ENCODE measurements at regions of chr6 and their contacts with region 1.

Region 1: GRCh38 chr6:122839477-122839876 is 50.4 kb downstream of the SMPDL3A start:
- DNase-seq: peak in 4 of 6 donors; percentile 27 to 72 (median 33)
- ATAC-seq: peak; percentile 48 to 97 (median 94)
- H3K4me3 ChIP-seq: no peak overlapping the region
- H3K27ac ChIP-seq: no peak overlapping the region
- H3K4me1 ChIP-seq: no peaks in the 10 kb centered on the region
- H3K27me3 ChIP-seq: no peaks in the 10 kb centered on the region
- CTCF ChIP-seq: peak; percentile 30 to 60 (median 38)

Region 2: GRCh38 chr6:122663981-122664380 is 175.5 kb before region 1 on chr6:
- intact Hi-C with region 1: no loop called
- DNase-seq: peak in 4 of 6 donors; percentile 17 to 50 (median 24)
- ATAC-seq: peak; percentile 69 to 72 (median 72)
- H3K4me3 ChIP-seq: no peak overlapping the region
- H3K27ac ChIP-seq: no peak overlapping the region
- H3K4me1 ChIP-seq: no peaks in the 10 kb centered on the region
- H3K27me3 ChIP-seq: no peaks in the 10 kb centered on the region
- CTCF ChIP-seq: no peak

Region 3: GRCh38 chr6:122730775-122731386 is 108.6 kb before region 1 on chr6:
- intact Hi-C with region 1: loop called in 2 of 3 experiments (anchors 5 to 10 kb)
- DNase-seq: peak in 1 of 6 donors; percentile 23
- ATAC-seq: peak in 3 of 4 donors; percentile 74 to 84 (median 81)
- H3K4me3 ChIP-seq: no peak overlapping the region
- H3K27ac ChIP-seq: no peak overlapping the region
- H3K4me1 ChIP-seq: no peaks in the 10 kb centered on the region
- H3K27me3 ChIP-seq: no peaks in the 10 kb centered on the region
- CTCF ChIP-seq: peak; percentile 27 to 59 (median 52)

Region 4: DNA sequence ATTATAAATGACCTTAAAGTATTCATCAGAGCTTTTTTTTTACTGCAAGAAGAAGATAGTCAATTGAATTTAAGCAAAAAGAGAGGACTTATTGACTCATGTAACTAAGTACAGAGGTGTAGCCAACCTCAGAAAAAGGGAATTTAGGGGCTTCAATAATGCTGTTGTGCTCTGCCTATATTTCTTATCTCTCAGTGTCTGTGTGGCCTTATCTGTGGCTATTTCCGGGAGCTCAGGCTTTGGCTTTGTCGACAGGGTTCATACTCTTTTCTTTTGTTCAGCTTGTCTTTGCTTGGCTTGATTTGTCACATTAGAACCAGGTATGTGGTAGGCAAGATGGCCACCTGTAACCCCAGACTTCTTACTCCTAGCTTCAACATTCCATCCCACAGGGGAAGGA is 98.5 kb before region 1 on chr6:
- intact Hi-C with region 1: loop called in 2 of 3 experiments (anchors 5 to 10 kb)
- DNase-seq: no peak
- ATAC-seq: no peak
- H3K4me3 ChIP-seq: no peak overlapping the region
- H3K27ac ChIP-seq: no peak overlapping the region
- H3K4me1 ChIP-seq: no peaks in the 10 kb centered on the region
- H3K27me3 ChIP-seq: no peaks in the 10 kb centered on the region
- CTCF ChIP-seq: no peak

Region 5: DNA sequence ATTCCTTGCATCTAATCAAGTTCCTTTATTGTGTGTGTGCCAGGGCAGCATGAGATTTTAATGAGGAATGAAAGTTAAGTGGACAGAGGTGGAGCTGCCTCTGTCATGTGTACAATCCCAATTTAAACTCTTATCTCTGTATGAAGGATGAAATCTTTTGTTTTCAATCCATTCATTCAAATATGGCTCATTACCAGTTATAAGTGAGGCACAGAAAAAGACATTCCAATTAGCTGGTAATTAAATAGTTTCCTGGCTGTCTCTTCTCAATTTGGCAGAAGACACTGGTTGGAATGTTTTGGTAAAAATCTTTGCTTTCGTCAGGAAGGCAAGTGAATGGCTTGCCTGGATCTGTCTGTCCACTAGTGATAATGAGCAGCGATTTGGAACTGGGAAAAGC is 202.9 kb after region 1 on chr6:
- intact Hi-C with region 1: no loop called
- DNase-seq: no peak
- ATAC-seq: no peak
- H3K4me3 ChIP-seq: no peak overlapping the region
- H3K27ac ChIP-seq: no peak overlapping the region
- H3K4me1 ChIP-seq: no peaks in the 10 kb centered on the region
- H3K27me3 ChIP-seq: no peaks in the 10 kb centered on the region
- CTCF ChIP-seq: no peak

Region 6: GRCh38 chr6:123089244-123089643 is 249.8 kb after region 1 on chr6:
- intact Hi-C with region 1: no loop called
- DNase-seq: no peak
- ATAC-seq: no peak
- H3K4me3 ChIP-seq: no peak overlapping the region
- H3K27ac ChIP-seq: no peak overlapping the region
- H3K4me1 ChIP-seq: no peaks in the 10 kb centered on the region
- H3K27me3 ChIP-seq: no peaks in the 10 kb centered on the region
- CTCF ChIP-seq: no peak